ENCODE measurements at regions of chr6 and their contacts with region 1.

Region 1: DNA sequence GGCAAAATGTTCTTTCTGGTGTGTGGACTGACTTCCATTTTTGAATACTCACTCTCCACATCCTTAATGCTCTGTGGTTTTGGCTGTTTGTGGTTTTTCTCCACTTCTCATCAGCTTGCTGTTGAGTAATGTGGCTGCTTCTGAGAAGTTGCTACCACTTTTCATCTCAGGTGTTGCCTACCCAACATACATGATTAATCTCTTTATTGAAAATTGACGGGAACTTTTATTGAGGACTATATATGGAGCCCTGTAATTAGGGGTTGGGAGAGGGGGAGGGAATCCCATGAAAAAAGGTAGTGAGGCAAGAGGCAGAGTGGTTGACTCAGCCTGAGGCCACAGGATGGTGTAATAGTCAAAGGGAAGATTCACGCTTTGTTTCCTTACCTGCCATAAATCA is 17.6 kb downstream of the IL22RA2 start:
- DNase-seq: peak; percentile 68
- H3K4me3 Mint-ChIP-seq: no peak overlapping the region
- H3K27ac Mint-ChIP-seq: peak overlapping the region; percentile 60
- H3K4me1 Mint-ChIP-seq: peaks cover 16% of the 10 kb centered on the region
- H3K27me3 Mint-ChIP-seq: peaks cover 13% of the 10 kb centered on the region

Region 2: GRCh38 chr6:137070303-137070702 is 85.5 kb before region 1 on chr6:
- CTCF ChIA-PET with region 1: no interaction called
- intact Hi-C with region 1: no loop called
- DNase-seq: no peak
- H3K4me3 Mint-ChIP-seq: no peak overlapping the region
- H3K27ac Mint-ChIP-seq: no peak overlapping the region
- H3K4me1 Mint-ChIP-seq: no peaks in the 10 kb centered on the region
- H3K27me3 Mint-ChIP-seq: peaks cover 37% of the 10 kb centered on the region

Region 3: DNA sequence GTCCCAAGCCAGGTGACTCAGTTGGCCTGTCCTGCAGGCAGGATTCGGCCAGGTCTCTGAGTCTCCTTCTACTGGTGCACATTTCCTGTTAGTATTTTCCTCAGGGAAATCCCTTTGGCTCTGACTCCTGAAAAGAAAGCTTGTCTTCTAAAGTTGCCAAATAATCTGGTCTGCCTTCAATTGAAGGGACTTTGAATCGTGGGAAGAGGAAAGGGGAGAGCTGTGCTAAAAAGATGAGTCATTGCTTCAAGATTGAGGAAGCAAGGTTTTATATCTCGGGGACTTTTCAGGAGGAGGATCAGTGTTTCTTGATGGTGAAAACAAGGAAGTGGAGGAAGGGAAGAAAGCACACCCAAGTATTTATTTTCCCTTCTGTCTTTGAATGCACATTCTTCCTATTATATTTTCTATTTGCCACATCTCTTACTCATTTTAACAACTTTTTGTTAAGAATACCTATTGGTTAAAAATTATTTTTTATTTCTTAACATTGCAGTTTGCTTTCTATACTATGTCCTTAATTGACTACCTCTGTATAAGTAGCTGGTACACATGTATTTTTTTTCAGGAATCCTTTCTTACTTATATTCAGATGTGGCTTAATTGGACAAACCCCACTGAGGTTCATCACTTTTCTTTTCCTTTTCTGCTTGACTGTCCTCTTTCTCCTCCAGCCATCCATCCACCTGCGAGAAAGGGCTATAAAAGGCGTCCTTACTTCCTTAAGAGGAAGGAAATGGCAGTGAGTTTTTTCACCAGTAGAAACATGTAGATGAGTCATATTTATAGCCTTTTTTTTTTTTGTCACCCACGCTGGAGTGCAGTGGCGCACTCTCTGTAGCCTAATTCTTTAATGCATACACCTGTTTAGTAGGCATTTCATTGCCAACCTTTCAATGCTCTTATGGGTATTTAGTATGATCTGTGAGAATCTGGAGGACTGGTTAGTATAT is 78.4 kb after region 1 on chr6:
- CTCF ChIA-PET with region 1: no interaction called
- intact Hi-C with region 1: loop called (anchors 1 kb)
- DNase-seq: peak; percentile 21
- H3K4me3 Mint-ChIP-seq: no peak overlapping the region
- H3K27ac Mint-ChIP-seq: peak overlapping the region; percentile 28
- H3K4me1 Mint-ChIP-seq: peaks cover 38% of the 10 kb centered on the region
- H3K27me3 Mint-ChIP-seq: peaks cover 5% of the 10 kb centered on the region

Region 4: DNA sequence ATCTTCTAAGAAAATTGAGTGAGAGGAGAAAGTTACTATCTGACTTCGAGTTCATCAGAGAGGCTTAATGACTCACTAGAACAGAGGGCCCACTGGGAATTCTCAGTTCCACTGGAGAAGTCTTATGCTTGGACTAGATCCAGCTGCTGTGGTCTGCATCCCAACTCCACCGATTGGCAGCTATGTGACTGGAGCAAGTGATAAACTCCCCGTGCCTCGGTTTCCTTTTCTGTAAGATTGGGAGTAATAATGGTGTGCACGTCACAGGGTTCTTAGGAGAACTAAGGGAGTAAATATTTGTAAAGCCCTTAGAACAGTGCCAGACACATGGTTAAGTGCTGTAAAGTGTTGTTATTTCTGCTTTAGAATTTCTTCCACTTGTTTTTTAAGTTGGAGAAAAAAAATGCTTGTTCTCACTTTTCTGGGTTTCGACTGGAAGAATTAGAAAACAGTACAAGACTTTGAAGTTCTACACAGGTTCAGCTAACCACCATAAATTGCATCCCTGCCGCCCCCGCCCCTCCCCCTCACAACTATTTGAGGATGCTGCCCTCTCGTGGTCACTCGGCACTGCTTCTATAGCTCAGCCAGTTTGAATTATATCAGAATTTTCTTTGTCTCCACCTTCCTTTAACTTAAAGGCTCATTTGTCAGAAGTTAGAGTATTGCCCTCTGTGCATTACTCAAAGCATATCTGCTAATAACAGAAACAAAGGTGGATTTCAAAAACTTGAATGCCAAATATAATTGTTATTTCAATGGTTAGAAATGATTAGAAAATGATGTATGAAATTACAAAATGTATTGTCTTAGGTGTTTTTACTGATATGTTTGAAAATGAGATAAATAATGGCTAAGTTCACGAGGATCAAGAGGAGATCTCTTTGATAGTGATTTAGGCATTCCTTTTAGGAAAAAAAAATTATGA is 158.4 kb after region 1 on chr6:
- CTCF ChIA-PET with region 1: interaction called, 8 read pairs
- intact Hi-C with region 1: loop called (anchors 1 kb)
- DNase-seq: peak; percentile 84
- H3K4me3 Mint-ChIP-seq: no peak overlapping the region
- H3K27ac Mint-ChIP-seq: no peak overlapping the region
- H3K4me1 Mint-ChIP-seq: peaks cover 2% of the 10 kb centered on the region
- H3K27me3 Mint-ChIP-seq: no peaks in the 10 kb centered on the region

Region 5: DNA sequence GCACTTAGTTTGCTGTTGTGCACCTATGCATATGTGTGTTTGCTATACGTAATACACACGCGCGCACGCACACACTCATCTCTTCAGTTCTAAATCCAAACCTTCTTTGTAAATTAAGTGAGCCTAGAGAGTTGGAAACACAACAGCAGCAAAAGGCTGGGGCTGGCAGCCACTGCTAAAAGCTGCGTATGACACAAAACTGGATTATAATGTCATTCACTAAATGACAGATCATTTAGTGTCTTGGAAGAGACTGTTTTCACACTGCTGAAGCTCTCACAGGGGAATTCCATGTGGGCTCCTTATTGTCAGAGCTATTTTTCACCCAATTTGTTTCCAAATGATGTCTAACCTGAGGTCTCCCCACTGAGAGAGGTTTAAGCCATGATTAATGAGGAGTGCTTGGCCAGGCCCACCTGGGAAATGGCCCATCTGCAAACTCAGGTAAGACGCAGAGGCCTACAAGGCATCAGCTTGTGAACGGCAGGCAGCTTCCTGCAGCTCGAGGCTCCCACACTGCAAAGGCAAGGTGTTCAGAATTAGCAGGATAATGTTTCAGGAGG is 244.1 kb after region 1 on chr6:
- CTCF ChIA-PET with region 1: no interaction called
- intact Hi-C with region 1: loop called (anchors 5 kb)
- DNase-seq: peak; percentile 52
- H3K4me3 Mint-ChIP-seq: no peak overlapping the region
- H3K27ac Mint-ChIP-seq: no peak overlapping the region
- H3K4me1 Mint-ChIP-seq: peaks cover 9% of the 10 kb centered on the region
- H3K27me3 Mint-ChIP-seq: no peaks in the 10 kb centered on the region

Region 6: DNA sequence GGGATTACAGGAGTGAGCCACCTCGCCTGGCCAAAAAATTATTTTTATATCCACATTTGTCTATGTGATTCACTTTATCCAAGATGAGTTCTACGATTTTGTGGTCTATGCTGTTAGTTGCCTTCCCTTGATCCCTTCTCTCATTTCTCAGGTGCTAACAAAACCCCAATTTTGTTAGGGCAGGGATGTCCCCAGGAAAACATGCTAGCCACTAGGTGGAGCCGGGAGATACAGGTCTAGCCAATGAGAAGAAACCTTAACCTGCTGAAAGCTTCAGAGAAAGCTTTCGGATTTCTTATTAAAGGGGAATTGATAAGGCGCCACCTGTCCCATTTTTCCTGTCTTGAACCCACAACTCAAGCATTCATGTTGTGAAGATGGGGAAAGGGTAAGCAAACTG is 505.8 kb after region 1 on chr6:
- CTCF ChIA-PET with region 1: interaction called, 3 read pairs
- intact Hi-C with region 1: loop called (anchors 2 kb)
- DNase-seq: peak; percentile 71
- H3K4me3 Mint-ChIP-seq: no peak overlapping the region
- H3K27ac Mint-ChIP-seq: no peak overlapping the region
- H3K4me1 Mint-ChIP-seq: peaks cover 19% of the 10 kb centered on the region
- H3K27me3 Mint-ChIP-seq: peaks cover 4% of the 10 kb centered on the region

Region 7: DNA sequence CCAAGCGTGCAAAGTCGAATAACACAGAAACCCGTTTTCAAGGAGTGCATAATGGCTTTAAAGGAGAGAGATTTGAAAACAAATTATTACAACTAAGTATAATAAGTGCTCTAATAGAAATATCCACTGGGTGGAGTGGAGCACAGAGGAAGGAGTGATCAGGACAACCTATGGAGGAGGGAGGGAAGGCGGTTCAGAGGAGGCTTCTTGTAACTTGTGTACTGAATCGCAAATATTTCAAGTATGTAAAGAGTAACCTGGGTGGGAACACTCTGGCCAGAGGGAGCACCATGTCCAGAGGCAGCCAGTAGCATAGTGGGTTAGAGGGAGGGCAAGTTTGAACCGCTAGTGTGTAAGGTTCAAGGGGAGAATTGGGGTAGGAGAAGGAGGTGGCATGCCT is 689.6 kb after region 1 on chr6:
- CTCF ChIA-PET with region 1: no interaction called
- intact Hi-C with region 1: loop called (anchors 1 kb)
- DNase-seq: no peak
- H3K4me3 Mint-ChIP-seq: no peak overlapping the region
- H3K27ac Mint-ChIP-seq: no peak overlapping the region
- H3K4me1 Mint-ChIP-seq: peaks cover 13% of the 10 kb centered on the region
- H3K27me3 Mint-ChIP-seq: no peaks in the 10 kb centered on the region

Measured in activated naive CD4-positive, alpha-beta T cell treated with anti-CD3 and anti-CD28 coated beads for 36 hours (primary cell).